HCT116 (cell line): ENCODE measurements at regions of chr3 and their contacts with region 1.

Region 1: DNA sequence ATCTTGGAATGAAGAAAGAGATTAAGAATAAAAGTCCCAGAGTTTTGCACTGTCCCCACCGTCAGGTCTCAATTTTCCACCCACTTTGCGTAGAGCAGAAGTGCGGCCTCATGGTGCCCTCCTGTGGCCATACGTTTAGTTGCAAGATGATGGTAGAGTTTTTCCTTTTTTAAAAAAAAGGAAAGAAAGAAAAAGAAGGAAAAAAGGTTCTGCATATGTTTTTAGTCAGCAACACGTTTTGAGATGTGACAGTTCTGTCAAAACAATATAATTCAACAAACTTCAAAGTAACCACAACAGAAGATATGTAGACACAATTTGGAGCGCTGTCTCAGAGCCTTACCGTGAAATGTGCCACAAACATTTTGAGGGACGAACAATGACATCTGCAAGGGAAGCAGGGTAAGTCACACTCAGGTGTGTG is 24.6 kb downstream of the EBLN2 start:
- DNase-seq: peak; percentile 38
- ATAC-seq: peak; percentile 83
- H3K4me3 ChIP-seq: no peak overlapping the region
- H3K27ac ChIP-seq: no peak overlapping the region
- H3K4me1 ChIP-seq: no peaks in the 10 kb centered on the region
- H3K27me3 ChIP-seq: no peaks in the 10 kb centered on the region
- CTCF ChIP-seq: peak; percentile 58 to 88 (median 78); a peak in 5 of 6 replicates
- POLR2A ChIP-seq: no peak
- RAD21 ChIP-seq: peak; percentile 88

Region 2: DNA sequence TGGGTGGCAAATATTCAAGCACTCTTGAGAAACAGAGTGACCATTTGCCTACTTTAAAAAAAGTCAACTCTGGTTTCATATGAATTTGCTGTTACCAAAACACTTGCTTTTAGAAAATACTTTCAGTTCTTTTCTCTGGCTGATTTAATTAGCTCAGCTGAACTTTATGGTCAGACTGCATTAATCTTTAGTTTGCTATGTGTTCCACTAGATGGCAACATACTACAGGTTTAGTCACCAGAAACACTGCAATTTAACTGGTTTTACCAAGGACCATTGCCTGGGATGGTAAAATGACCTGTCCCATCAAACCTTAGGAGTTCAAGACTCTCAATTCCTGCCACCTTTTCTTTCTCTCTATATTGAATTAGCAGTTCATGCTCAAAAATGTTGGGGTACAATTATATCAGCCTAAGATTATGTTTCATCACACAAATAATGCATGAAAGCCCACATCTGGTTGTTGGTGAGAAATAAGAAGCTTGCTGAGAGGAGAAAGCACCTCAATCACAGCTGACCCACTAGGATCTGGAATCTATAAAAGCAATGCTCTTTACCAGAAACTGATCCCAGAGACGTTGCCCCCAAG is 1375.1 kb before region 1 on chr3:
- CTCF ChIA-PET with region 1: no interaction called
- POLR2A ChIA-PET with region 1: no interaction called
- RAD21 ChIA-PET with region 1: no interaction called
- intact Hi-C with region 1: loop called (anchors 5 kb)
- DNase-seq: peak; percentile 21
- ATAC-seq: peak; percentile 80
- H3K4me3 ChIP-seq: no peak overlapping the region
- H3K27ac ChIP-seq: no peak overlapping the region
- H3K4me1 ChIP-seq: no peaks in the 10 kb centered on the region
- H3K27me3 ChIP-seq: no peaks in the 10 kb centered on the region
- CTCF ChIP-seq: peak; percentile 47 to 70 (median 48); a peak in 5 of 6 replicates
- POLR2A ChIP-seq: no peak
- RAD21 ChIP-seq: peak; percentile 78

Region 3: GRCh38 chr3:71875461-71875947 is 1210.6 kb before region 1 on chr3:
- CTCF ChIA-PET with region 1: no interaction called
- POLR2A ChIA-PET with region 1: no interaction called
- RAD21 ChIA-PET with region 1: no interaction called
- intact Hi-C with region 1: loop called (anchors 5 kb)
- DNase-seq: peak; percentile 42
- ATAC-seq: peak; percentile 100
- H3K4me3 ChIP-seq: no peak overlapping the region
- H3K27ac ChIP-seq: no peak overlapping the region
- H3K4me1 ChIP-seq: no peaks in the 10 kb centered on the region
- H3K27me3 ChIP-seq: 0 out of 2 replicates have a peak, but pooled peaks cover 9% of the 10 kb centered on the region
- CTCF ChIP-seq: peak; percentile 62 to 91 (median 86)
- POLR2A ChIP-seq: no peak
- RAD21 ChIP-seq: peak; percentile 79

Region 4: DNA sequence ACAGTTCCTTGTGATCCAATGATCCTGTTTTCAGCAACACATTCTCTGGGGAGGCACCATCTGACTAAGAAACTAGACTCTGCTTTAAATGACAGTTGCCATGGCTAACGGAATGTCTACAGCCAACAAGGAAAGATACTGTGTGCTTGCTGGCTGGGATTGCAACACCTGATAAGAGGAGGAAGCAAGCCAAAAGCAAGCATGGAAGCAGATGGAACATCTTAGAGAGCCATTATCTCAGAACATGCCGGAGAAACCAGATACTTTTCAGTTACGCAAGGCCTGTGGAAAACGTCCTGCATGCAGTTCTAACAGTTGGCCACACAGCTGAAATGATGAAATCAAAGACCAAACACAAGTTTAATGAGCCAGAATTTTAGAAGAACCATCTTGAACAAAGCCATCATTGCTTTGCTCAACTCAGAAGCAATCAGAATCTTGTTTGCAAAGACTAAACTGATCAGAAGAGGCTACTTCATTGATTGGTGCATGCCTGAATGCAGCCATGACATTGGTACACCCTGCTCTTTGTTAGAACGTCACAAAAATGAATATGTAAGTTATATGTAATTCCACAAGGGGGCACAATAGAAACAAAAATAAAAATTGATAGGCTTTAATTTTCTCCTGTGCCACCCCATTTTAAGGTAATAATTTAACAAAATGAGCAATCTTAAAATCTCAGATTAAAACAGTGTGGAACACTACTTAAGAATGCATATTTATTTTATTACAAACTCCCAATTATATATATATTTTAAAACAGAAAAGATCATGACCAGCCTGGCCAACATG is 147.4 kb before region 1 on chr3:
- CTCF ChIA-PET with region 1: interaction called, 4 read pairs
- POLR2A ChIA-PET with region 1: no interaction called
- RAD21 ChIA-PET with region 1: no interaction called
- intact Hi-C with region 1: loop called (anchors 1 kb)
- DNase-seq: peak; percentile 54
- ATAC-seq: peak; percentile 98
- H3K4me3 ChIP-seq: no peak overlapping the region
- H3K27ac ChIP-seq: no peak overlapping the region
- H3K4me1 ChIP-seq: peaks cover 0 to 6% of the 10 kb centered on the region in 2 experiments; a peak in 2 of 4 replicates
- H3K27me3 ChIP-seq: no peaks in the 10 kb centered on the region
- CTCF ChIP-seq: peak; percentile 29 to 72 (median 70); a peak in 5 of 6 replicates
- POLR2A ChIP-seq: no peak
- RAD21 ChIP-seq: peak; percentile 70